ENCODE measurements at regions of chr14 and their contacts with region 1.

Region 1: GRCh38 chr14:67571272-67571850 is 28.7 kb downstream of the PIGH start:
- DNase-seq: peak in 2 of 4 donors; percentile 31 to 65
- ATAC-seq: peak; percentile 88
- H3K4me3 ChIP-seq: no peak overlapping the region
- H3K27ac ChIP-seq: no peak overlapping the region
- H3K4me1 ChIP-seq: no peaks in the 10 kb centered on the region
- H3K27me3 ChIP-seq: no peaks in the 10 kb centered on the region
- CTCF ChIP-seq: peak; percentile 69 to 87

Region 2: GRCh38 chr14:67426983-67427606 is 144.3 kb before region 1 on chr14:
- intact Hi-C with region 1: loop called in 1 of 2 experiments (anchors 5 kb)
- DNase-seq: peak in 3 of 4 donors; percentile 55 to 87 (median 64)
- ATAC-seq: peak; percentile 95
- H3K4me3 ChIP-seq: no peak overlapping the region
- H3K27ac ChIP-seq: no peak overlapping the region
- H3K4me1 ChIP-seq: peaks cover 2 to 3% of the 10 kb centered on the region in 2 donors
- H3K27me3 ChIP-seq: peaks cover 0 to 15% of the 10 kb centered on the region in 2 donors
- CTCF ChIP-seq: peak; percentile 53 to 75